ENCODE measurements at regions of chr1 and their contacts with region 1.

Region 1: DNA sequence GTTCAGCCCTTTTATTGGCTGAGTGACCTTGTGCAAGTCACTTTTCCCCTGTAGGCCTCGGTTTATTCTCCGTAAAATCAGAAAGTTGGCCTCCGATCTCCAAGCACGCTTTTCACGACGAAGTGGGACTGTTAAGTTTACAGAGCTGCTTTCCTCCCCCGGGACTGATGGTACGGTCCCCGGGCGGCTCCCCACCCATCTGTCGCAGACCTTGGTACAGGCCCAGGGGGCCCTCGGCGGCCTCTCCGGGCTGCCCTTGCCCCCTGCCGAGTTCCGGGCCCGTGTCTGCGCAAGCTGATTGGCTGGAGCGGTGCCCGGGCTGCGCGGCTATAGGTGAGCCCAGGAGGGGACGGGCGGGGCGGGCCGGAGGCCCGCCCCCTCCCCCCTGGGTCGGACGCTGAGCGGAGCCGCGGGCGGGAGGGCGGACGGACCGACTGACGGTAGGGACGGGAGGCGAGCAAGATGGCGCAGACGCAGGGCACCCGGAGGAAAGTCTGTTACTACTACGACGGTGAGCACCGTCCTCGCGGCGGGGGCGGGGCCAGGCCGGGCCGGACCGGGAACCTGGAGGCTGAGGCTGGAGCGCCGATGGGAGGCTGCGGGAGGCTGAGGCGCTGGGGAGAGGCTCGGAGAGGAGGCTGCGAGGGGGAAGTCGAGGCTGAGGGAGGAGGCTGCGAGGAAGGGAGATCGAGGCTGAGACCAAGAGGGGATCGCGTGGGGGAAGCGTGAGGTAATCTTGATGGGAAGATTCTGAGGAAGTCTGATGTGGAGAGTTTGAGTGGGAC is at the start of gene HDAC1:
- DNase-seq: peak; percentile 91
- ATAC-seq: peak; percentile 98
- H3K4me3 Mint-ChIP-seq: peak within 1 kb of the TSS; percentile 100
- H3K27ac Mint-ChIP-seq: peak within 1 kb of the TSS; percentile 98
- H3K4me1 Mint-ChIP-seq: peaks cover 48% of the 10 kb centered on the region
- H3K27me3 Mint-ChIP-seq: no peaks in the 10 kb centered on the region
- CTCF ChIP-seq: no peak
- total RNA-seq, gene HDAC1: 204 and 212 TPM in 2 replicates

Region 2: DNA sequence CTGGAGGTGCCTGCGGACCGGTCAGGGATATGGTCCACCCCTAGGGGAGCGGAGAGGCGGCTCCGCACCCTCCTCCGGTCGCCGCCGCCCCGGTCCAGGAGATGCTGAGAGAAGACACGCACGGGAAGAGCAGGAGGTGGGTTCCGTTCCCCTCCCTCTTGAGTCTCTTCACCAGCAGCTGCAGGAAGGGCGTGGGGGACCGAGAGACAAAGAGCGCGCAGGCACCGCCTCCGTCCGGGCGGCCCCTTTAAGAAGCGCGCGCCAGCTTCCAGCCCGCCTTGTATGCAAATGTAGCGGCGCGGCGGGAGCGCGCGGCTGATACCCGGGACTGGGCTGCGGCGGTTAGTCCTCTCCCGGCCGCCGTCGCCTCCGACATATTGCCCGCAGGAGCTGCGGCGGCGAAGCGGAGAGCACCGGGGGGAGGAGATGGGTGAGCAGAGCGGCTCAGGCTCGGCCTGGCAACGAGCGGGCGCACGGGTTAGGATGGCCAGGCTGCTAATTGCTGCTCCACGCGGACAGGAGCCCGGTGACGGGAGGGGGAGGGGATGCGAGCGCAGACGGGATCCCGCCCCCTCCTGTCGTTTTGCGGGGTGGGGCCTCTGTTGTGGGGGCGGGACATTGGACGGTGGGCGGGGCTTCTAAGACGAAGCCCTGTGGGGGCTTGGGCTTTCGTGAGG is 219.1 kb before region 1 on chr1 and contains the start of gene TMEM39B:
- CTCF ChIA-PET with region 1: no interaction called
- POLR2A ChIA-PET with region 1: interaction called, 6 read pairs
- intact Hi-C with region 1: loop called (anchors 2 kb)
- DNase-seq: peak; percentile 92
- ATAC-seq: peak; percentile 82
- H3K4me3 Mint-ChIP-seq: peak within 1 kb of the TSS; percentile 93
- H3K27ac Mint-ChIP-seq: peak within 1 kb of the TSS; percentile 95
- H3K4me1 Mint-ChIP-seq: peaks cover 35% of the 10 kb centered on the region
- H3K27me3 Mint-ChIP-seq: no peaks in the 10 kb centered on the region
- CTCF ChIP-seq: no peak
- total RNA-seq, gene TMEM39B: 23.1 and 23.8 TPM in 2 replicates

Region 3: GRCh38 chr1:32200226-32201010 is 91.5 kb before region 1 on chr1 and contains the start of gene CCDC28B:
- CTCF ChIA-PET with region 1: no interaction called
- POLR2A ChIA-PET with region 1: interaction called, 9 read pairs
- intact Hi-C with region 1: loop called (anchors 5 kb)
- DNase-seq: peak; percentile 62
- ATAC-seq: peak; percentile 51
- H3K4me3 Mint-ChIP-seq: peak within 1 kb of the TSS; percentile 87
- H3K27ac Mint-ChIP-seq: peak within 1 kb of the TSS; percentile 87
- H3K4me1 Mint-ChIP-seq: peaks cover 49% of the 10 kb centered on the region
- H3K27me3 Mint-ChIP-seq: no peaks in the 10 kb centered on the region
- CTCF ChIP-seq: no peak
- total RNA-seq, gene CCDC28B: 50.4 and 56.9 TPM in 2 replicates

Region 4: DNA sequence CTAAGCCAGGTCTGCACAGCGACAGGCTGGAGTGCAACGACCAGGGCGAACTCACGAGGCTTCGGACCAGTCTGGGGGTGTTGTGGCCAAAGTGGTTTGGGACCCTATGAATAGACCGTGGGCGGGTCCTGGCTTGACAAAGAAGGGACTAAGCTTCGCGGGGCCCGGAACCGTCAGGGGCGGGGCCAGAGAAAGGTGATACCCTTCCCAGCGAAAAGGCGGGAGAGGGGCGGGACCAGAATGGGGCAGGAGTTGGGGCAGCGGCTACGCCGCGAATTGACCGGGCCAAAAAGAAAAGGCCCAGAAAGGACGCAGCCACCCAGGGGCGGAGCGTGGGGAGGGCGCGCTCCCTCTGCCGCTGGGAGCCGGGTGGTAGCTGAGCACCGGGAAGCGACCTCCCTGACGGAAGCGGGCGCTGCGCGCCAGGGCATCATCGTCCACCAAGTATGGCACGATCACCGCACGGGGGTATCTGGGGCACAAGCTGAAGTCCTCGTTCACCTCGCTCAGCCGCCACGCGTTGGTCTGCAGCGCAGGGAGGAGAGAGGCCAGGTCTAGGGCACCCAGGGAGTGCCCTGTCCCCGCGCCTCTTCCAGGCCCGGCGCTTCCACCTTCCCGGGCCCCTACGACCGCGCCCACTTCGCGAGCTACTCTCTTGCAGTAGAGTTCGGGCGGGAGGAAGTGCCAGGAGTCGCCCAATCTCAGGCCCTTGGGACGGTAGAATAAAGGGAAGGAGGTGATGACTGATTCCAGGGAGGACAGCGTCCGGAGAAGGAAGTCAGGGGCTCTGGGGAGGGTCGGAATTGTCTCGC is 51.6 kb before region 1 on chr1:
- CTCF ChIA-PET with region 1: interaction called, 27 read pairs
- POLR2A ChIA-PET with region 1: interaction called, 45 read pairs
- intact Hi-C with region 1: loop called (anchors 1 kb)
- DNase-seq: peak; percentile 68
- ATAC-seq: peak; percentile 77
- H3K4me3 Mint-ChIP-seq: peak overlapping the region; percentile 89
- H3K27ac Mint-ChIP-seq: peak overlapping the region; percentile 87
- H3K4me1 Mint-ChIP-seq: peaks cover 21% of the 10 kb centered on the region
- H3K27me3 Mint-ChIP-seq: no peaks in the 10 kb centered on the region
- CTCF ChIP-seq: no peak

Region 5: DNA sequence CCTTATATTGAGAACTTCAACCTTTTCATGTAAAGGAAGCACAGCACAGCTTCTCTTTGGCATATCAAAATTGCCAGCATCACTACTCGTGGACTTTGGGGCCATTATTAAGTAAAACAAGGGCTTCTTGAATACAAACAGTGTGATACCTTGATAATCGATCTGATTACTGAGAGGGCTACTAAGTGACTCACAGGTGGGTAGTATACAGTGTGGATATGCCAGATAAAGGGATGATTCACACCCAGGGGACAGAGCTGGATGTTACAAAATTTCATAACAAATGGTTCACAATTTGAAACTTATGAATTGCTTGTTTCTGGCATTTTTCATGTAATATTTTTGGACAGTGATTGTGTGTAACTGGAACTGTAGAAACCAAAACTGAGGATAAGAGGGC is 15.4 kb after region 1 on chr1:
- CTCF ChIA-PET with region 1: no interaction called
- POLR2A ChIA-PET with region 1: interaction called, 11 read pairs
- intact Hi-C with region 1: loop called (anchors 2 kb)
- DNase-seq: no peak
- ATAC-seq: no peak
- H3K4me3 Mint-ChIP-seq: peak overlapping the region; percentile 60
- H3K27ac Mint-ChIP-seq: peak overlapping the region; percentile 22
- H3K4me1 Mint-ChIP-seq: peaks cover 65% of the 10 kb centered on the region
- H3K27me3 Mint-ChIP-seq: no peaks in the 10 kb centered on the region
- CTCF ChIP-seq: no peak

Region 6: GRCh38 chr1:32394141-32394889 is 102.4 kb after region 1 on chr1 and contains the start of gene BSDC1:
- CTCF ChIA-PET with region 1: no interaction called
- POLR2A ChIA-PET with region 1: interaction called, 12 read pairs
- intact Hi-C with region 1: loop called (anchors 2 kb)
- DNase-seq: peak; percentile 97
- ATAC-seq: peak; percentile 99
- H3K4me3 Mint-ChIP-seq: peak within 1 kb of the TSS; percentile 100
- H3K27ac Mint-ChIP-seq: peak within 1 kb of the TSS; percentile 98
- H3K4me1 Mint-ChIP-seq: peaks cover 27% of the 10 kb centered on the region
- H3K27me3 Mint-ChIP-seq: no peaks in the 10 kb centered on the region
- CTCF ChIP-seq: no peak
- total RNA-seq, gene BSDC1: 51.8 and 72.2 TPM in 2 replicates

Region 7: GRCh38 chr1:32741413-32742198 is 449.7 kb after region 1 on chr1:
- CTCF ChIA-PET with region 1: no interaction called
- POLR2A ChIA-PET with region 1: no interaction called
- intact Hi-C with region 1: no loop called
- DNase-seq: peak; percentile 22
- ATAC-seq: peak; percentile 21
- H3K4me3 Mint-ChIP-seq: peak overlapping the region; percentile 77
- H3K27ac Mint-ChIP-seq: no peak overlapping the region
- H3K4me1 Mint-ChIP-seq: peaks cover 2% of the 10 kb centered on the region
- H3K27me3 Mint-ChIP-seq: peaks cover 18% of the 10 kb centered on the region
- CTCF ChIP-seq: no peak